Spleen (tissue), 13 donors: ENCODE measurements at regions of chr7 and their contacts with region 1.

Region 1: DNA sequence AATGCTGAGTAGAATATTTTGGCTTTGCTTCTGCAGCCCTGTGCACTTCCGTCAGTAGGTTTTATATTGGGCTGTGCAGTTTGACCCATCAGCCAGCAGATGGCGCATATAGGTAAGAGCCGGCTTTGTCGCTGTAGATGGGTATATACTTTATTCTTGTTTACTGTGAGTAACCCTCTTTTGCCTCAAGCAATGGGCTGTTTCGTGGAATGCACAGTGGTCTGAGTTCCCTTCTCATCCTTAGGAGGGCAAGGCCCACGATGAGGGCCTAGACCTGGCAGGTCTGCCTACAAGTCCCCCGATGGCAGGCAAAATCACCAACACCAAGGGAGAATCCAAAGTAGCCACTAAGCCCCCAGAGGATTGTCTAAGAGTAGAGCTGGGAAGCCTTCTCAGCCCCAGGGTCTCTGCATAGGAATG is 1002.9 kb upstream of the KCND2 start:
- DNase-seq: peak; percentile 21
- H3K4me3 ChIP-seq: no peak overlapping the region
- H3K27ac ChIP-seq: no peak overlapping the region
- H3K4me1 ChIP-seq: no peaks in the 10 kb centered on the region
- H3K27me3 ChIP-seq: no peaks in the 10 kb centered on the region
- CTCF ChIP-seq: peak in 8 of 11 experiments; percentile 30 to 72 (median 64)
- POLR2A ChIP-seq: no peak

Region 2: GRCh38 chr7:120260111-120260510 is 990.1 kb after region 1 on chr7:
- intact Hi-C with region 1: loop called (anchors 10 kb)
- DNase-seq: no peak
- H3K4me3 ChIP-seq: no peak overlapping the region
- H3K27ac ChIP-seq: no peak overlapping the region
- H3K4me1 ChIP-seq: no peaks in the 10 kb centered on the region
- H3K27me3 ChIP-seq: no peaks in the 10 kb centered on the region
- CTCF ChIP-seq: no peak
- POLR2A ChIP-seq: no peak